ENCODE measurements at regions of chr6 and their contacts with region 1.

Region 1: GRCh38 chr6:41008011-41008410 is 31.0 kb downstream of the UNC5CL start:
- DNase-seq: no peak
- ATAC-seq: no peak
- H3K4me3 ChIP-seq: no peak overlapping the region
- H3K4me1 ChIP-seq: no peaks in the 10 kb centered on the region
- CTCF ChIP-seq: no peak

Region 2: GRCh38 chr6:41066867-41067304 is 58.9 kb after region 1 on chr6:
- intact Hi-C with region 1: loop called in 1 of 2 experiments (anchors 5 kb)
- DNase-seq: peak in 2 of 3 donors; percentile 69 to 90
- ATAC-seq: peak; percentile 47
- H3K4me3 ChIP-seq: no peak overlapping the region
- H3K4me1 ChIP-seq: peaks cover 27% of the 10 kb centered on the region
- CTCF ChIP-seq: peak; percentile 73